PC-3 (cell line): ENCODE measurements at regions of chr12 and their contacts with region 1.

Region 1: GRCh38 chr12:30088259-30088995 is 304.7 kb upstream of the TMTC1 start:
- DNase-seq: peak; percentile 79
- ATAC-seq: peak; percentile 90
- H3K4me3 ChIP-seq: 0 out of 2 replicates have a peak overlapping the region, but pooled peaks have one; percentile 23
- H3K27ac ChIP-seq: peak overlapping the region; percentile 71
- H3K4me1 ChIP-seq: peaks cover 24% of the 10 kb centered on the region
- H3K27me3 ChIP-seq: no peaks in the 10 kb centered on the region
- CTCF ChIP-seq: no peak

Region 2: DNA sequence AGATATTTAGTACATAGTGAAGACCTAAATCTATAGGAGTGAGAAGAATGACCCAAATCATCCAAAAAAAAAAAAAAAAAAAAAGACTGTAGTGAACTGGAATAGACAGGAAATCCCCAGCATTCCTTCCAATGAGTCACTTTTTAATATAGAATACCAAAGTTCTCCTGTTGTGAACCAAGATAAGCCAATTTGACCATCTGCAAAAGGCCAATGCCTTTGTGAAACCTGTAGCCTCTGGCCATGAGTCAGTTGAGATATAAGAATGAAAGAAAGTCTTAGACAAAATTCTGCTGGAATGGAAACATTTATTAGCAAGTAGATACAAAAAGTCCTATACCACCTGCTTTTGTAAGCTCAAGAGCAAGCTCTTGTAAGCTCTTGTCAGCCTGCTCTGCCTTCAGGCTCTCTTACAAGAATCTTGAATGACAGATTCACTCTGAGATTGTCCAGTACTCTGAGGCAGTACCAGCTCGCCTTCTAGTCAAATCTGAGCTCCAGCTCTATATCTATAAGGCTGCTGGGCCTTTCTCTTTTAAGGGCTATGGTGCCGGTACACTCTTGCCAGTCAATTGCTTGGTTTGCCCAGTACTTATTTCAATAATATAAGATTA is 61.7 kb before region 1 on chr12:
- CTCF ChIA-PET with region 1: no interaction called
- POLR2A ChIA-PET with region 1: no interaction called
- intact Hi-C with region 1: loop called (anchors 10 kb)
- DNase-seq: peak; percentile 80
- ATAC-seq: peak; percentile 90
- H3K4me3 ChIP-seq: no peak overlapping the region
- H3K27ac ChIP-seq: peak overlapping the region; percentile 51
- H3K4me1 ChIP-seq: peaks cover 21% of the 10 kb centered on the region
- H3K27me3 ChIP-seq: no peaks in the 10 kb centered on the region
- CTCF ChIP-seq: no peak